ENCODE measurements at regions of chr10 and their contacts with region 1.

Region 1: GRCh38 chr10:16817125-16818019 is at the start of gene RSU1:
- DNase-seq: peak; percentile 100
- H3K4me3 ChIP-seq: peak within 1 kb of the TSS; percentile 84
- H3K4me3 Mint-ChIP-seq: peak within 1 kb of the TSS; percentile 97
- H3K27ac Mint-ChIP-seq: peak within 1 kb of the TSS; percentile 89
- H3K4me1 ChIP-seq: peaks cover 4% of the 10 kb centered on the region
- H3K4me1 Mint-ChIP-seq: peaks cover 20% of the 10 kb centered on the region
- H3K27me3 ChIP-seq: no peaks in the 10 kb centered on the region
- H3K27me3 Mint-ChIP-seq: no peaks in the 10 kb centered on the region
- CTCF ChIP-seq: no peak
- total RNA-seq, gene RSU1: 62.0 and 66.6 TPM in 2 replicates

Region 2: DNA sequence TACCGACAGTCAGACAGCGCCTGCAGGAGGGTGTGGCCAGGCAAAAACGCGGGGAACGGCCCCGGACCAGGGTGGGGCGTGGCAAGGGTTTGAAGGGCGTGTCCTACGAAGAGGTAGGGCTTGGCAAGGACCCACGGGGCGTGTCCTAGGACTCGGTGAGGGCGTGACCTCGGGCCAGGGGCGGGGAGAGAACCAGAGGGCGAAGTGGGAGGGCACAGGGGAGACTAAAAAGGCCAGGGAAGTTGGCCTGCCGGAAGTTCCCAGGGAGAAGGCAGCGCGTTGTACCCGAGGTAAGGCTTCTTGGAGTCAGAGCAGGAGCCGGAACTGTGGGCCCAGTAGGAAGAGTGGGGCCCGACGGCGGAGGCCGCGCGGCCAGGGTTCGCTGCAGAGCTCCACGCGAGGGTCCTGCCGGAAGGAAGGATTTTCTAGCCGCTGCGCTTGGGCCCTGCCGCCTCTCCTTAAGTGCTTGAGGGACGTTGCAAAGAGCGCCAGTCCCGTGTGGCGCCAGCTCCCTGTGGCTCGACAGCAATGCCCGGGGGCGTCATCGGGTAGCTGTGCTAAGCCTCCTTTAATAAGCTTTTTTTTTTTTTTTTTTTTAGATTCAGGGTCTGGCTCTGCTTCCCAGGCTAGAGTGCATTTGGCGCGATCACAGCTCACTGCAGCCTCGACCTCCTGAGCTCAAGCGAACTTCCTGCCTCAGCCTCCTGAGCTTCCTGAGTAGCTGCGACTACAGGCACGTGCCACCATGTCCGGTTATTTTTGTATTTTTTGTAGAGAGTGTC is 380.4 kb before region 1 on chr10 and contains the start of gene PTER:
- CTCF ChIA-PET with region 1: no interaction called
- POLR2A ChIA-PET with region 1: interaction called, 3 read pairs
- intact Hi-C with region 1: loop called (anchors 1 kb)
- DNase-seq: peak; percentile 100
- H3K4me3 ChIP-seq: peak within 1 kb of the TSS; percentile 58
- H3K4me3 Mint-ChIP-seq: peak within 1 kb of the TSS; percentile 86
- H3K27ac Mint-ChIP-seq: peak within 1 kb of the TSS; percentile 85
- H3K4me1 ChIP-seq: peaks cover 7% of the 10 kb centered on the region
- H3K4me1 Mint-ChIP-seq: peaks cover 6% of the 10 kb centered on the region
- H3K27me3 ChIP-seq: no peaks in the 10 kb centered on the region
- H3K27me3 Mint-ChIP-seq: peaks cover 6% of the 10 kb centered on the region
- CTCF ChIP-seq: no peak
- total RNA-seq, gene PTER: 25.8 and 27.4 TPM in 2 replicates

Region 3: GRCh38 chr10:16843252-16843870 is 26.0 kb after region 1 on chr10:
- CTCF ChIA-PET with region 1: no interaction called
- POLR2A ChIA-PET with region 1: no interaction called
- intact Hi-C with region 1: no loop called
- DNase-seq: peak in 1 of 2 experiments; percentile 69
- H3K4me3 ChIP-seq: no peak overlapping the region
- H3K4me3 Mint-ChIP-seq: no peak overlapping the region
- H3K27ac Mint-ChIP-seq: no peak overlapping the region
- H3K4me1 ChIP-seq: no peaks in the 10 kb centered on the region
- H3K4me1 Mint-ChIP-seq: no peaks in the 10 kb centered on the region
- H3K27me3 ChIP-seq: no peaks in the 10 kb centered on the region; the same call in 1 of the 2 replicates
- H3K27me3 Mint-ChIP-seq: peaks cover 9% of the 10 kb centered on the region
- CTCF ChIP-seq: peak; percentile 58 to 81

Region 4: GRCh38 chr10:16952610-16953009 is 135.2 kb after region 1 on chr10:
- CTCF ChIA-PET with region 1: no interaction called
- POLR2A ChIA-PET with region 1: no interaction called
- intact Hi-C with region 1: no loop called
- DNase-seq: no peak
- H3K4me3 ChIP-seq: no peak overlapping the region
- H3K4me3 Mint-ChIP-seq: no peak overlapping the region
- H3K27ac Mint-ChIP-seq: no peak overlapping the region
- H3K4me1 ChIP-seq: no peaks in the 10 kb centered on the region
- H3K4me1 Mint-ChIP-seq: no peaks in the 10 kb centered on the region
- H3K27me3 ChIP-seq: no peaks in the 10 kb centered on the region
- H3K27me3 Mint-ChIP-seq: peaks cover 18% of the 10 kb centered on the region
- CTCF ChIP-seq: no peak